HEK293 (cell line): ENCODE measurements at regions of chr7 and their contacts with region 1.

Region 1: DNA sequence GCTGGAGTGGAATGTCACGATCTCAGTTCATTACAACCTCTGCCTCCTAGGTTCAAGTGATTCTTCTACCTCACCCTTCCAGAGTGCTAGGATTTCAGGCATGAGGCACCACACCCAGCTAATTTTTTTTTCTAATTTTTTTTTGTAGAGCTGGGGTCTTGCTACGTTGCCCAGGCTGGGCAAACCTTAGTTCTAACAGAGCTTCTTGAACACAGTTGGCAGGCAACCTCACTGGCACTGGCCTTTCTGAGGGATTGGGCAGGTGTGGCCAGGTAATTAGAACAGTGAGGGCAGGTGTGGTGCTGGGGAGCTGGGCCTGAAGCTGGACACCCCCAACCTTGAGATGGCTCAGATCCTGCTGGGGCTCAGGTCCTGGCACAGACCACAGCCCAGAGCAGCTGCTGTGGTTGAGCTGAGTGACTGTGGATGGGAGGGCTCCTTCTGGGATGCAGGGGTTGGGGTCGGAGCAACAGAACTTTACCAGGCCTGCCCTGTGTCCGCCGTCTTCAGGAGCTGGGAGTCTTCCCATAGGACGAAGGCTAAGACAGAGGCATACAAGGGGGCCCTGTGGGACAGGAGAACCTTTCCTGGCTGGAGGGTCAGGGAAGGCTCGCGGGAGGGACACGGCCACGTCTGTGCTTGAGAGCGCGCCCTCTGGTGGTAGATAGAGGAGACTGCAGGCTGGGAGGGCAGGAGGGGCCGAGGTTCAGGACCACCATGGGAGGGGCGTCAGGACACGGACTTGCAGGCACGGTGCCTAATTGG is 48.2 kb downstream of the COL26A1 start:
- H3K4me3 ChIP-seq: no peak overlapping the region
- H3K27ac ChIP-seq: no peak overlapping the region
- H3K4me1 ChIP-seq: no peaks in the 10 kb centered on the region
- CTCF ChIP-seq: peak; percentile 94

Region 2: GRCh38 chr7:101363734-101364374 is 47.1 kb before region 1 on chr7:
- CTCF ChIA-PET with region 1: interaction called, 37 read pairs
- POLR2A ChIA-PET with region 1: no interaction called
- H3K4me3 ChIP-seq: peak overlapping the region; percentile 53
- H3K27ac ChIP-seq: peak overlapping the region; percentile 66; the same call in 1 of the 2 replicates
- H3K4me1 ChIP-seq: no peaks in the 10 kb centered on the region
- CTCF ChIP-seq: peak; percentile 90

Region 3: DNA sequence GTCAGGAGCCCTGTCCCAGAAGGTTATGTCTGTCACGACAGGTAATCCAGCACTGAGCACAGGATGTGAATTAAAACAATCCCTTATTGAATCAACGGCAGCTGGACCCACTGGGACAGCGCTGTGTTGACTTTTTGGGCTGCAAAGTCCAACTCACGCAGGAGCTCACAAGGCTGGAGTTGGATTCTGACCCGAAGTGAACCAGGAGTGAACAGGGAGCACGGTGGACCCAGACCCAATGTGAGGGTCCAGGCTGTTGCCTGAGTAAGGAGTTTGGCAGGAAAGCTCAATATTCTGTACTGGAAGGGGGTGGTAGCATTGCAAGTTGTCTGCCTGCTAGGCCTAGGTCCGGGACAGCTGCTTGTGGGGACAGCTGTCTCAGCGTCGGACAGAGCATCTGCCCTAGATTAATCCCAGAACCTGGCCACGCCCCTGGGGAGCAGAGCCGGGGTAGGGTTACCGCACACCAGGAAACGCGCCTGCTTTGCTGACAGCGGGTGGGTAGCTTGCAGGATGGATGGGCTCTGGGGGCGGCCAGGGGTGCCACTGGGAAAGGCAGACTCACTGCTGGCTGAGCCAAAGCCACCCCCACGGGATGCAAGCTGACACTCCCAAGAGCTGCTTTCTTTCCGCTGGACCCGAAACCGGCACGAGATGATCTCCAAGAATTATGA is 24.2 kb before region 1 on chr7:
- CTCF ChIA-PET with region 1: interaction called, 13 read pairs
- POLR2A ChIA-PET with region 1: no interaction called
- H3K4me3 ChIP-seq: no peak overlapping the region
- H3K27ac ChIP-seq: no peak overlapping the region
- H3K4me1 ChIP-seq: peaks cover 5% of the 10 kb centered on the region; the same call in 1 of the 2 replicates
- CTCF ChIP-seq: no peak

Region 4: GRCh38 chr7:101436857-101437576 is 26.1 kb after region 1 on chr7:
- CTCF ChIA-PET with region 1: interaction called, 10 read pairs
- POLR2A ChIA-PET with region 1: no interaction called
- H3K4me3 ChIP-seq: no peak overlapping the region
- H3K27ac ChIP-seq: no peak overlapping the region
- H3K4me1 ChIP-seq: no peaks in the 10 kb centered on the region
- CTCF ChIP-seq: no peak

Region 5: GRCh38 chr7:101784292-101785127 is 373.6 kb after region 1 on chr7:
- CTCF ChIA-PET with region 1: no interaction called
- POLR2A ChIA-PET with region 1: no interaction called
- H3K4me3 ChIP-seq: no peak overlapping the region
- H3K27ac ChIP-seq: no peak overlapping the region
- H3K4me1 ChIP-seq: no peaks in the 10 kb centered on the region
- CTCF ChIP-seq: no peak

Region 6: GRCh38 chr7:101924171-101924570 is 513.2 kb after region 1 on chr7:
- CTCF ChIA-PET with region 1: no interaction called
- POLR2A ChIA-PET with region 1: no interaction called
- H3K4me3 ChIP-seq: no peak overlapping the region
- H3K27ac ChIP-seq: no peak overlapping the region
- H3K4me1 ChIP-seq: no peaks in the 10 kb centered on the region
- CTCF ChIP-seq: no peak